HepG2 (cell line): ENCODE measurements at regions of chr13 and their contacts with region 1.

Region 1: GRCh38 chr13:41132512-41133152 is at the start of gene KBTBD6:
- DNase-seq: peak; percentile 97
- ATAC-seq: peak; percentile 98
- H3K4me3 ChIP-seq: peak within 1 kb of the TSS; percentile 76 to 89 (median 84)
- H3K27ac ChIP-seq: peak within 1 kb of the TSS; percentile 66
- H3K4me1 ChIP-seq: peaks cover 54% of the 10 kb centered on the region
- H3K27me3 ChIP-seq: no peaks in the 10 kb centered on the region
- CTCF ChIP-seq: peak; percentile 23; the same call in 1 of the 2 replicates
- EP300 ChIP-seq: peak in 1 of 2 experiments; percentile 46; a peak in 1 of 4 replicates
- POLR2A ChIP-seq: peak; percentile 82 to 88
- RAD21 ChIP-seq: 0 out of 2 replicates have a peak, but pooled peaks have one; percentile 22
- total RNA-seq, gene KBTBD6: 12.0 and 18.8 TPM in 2 replicates

Region 2: GRCh38 chr13:41075034-41075433 is 57.6 kb before region 1 on chr13:
- CTCF ChIA-PET with region 1: no interaction called
- POLR2A ChIA-PET with region 1: no interaction called
- in situ Hi-C with region 1: no loop called
- intact Hi-C with region 1: loop called (anchors 1 kb)
- DNase-seq: no peak
- ATAC-seq: no peak
- H3K4me3 ChIP-seq: no peak overlapping the region
- H3K27ac ChIP-seq: no peak overlapping the region
- H3K4me1 ChIP-seq: no peaks in the 10 kb centered on the region
- H3K27me3 ChIP-seq: no peaks in the 10 kb centered on the region
- CTCF ChIP-seq: peak; percentile 53
- EP300 ChIP-seq: no peak
- POLR2A ChIP-seq: no peak
- RAD21 ChIP-seq: 0 out of 2 replicates have a peak, but pooled peaks have one; percentile 36

Region 3: GRCh38 chr13:41085961-41086585 is 46.6 kb before region 1 on chr13:
- CTCF ChIA-PET with region 1: no interaction called
- POLR2A ChIA-PET with region 1: no interaction called
- in situ Hi-C with region 1: no loop called
- intact Hi-C with region 1: loop called (anchors 5 kb)
- DNase-seq: no peak
- ATAC-seq: peak; percentile 31; the same call in 1 of the 3 replicates
- H3K4me3 ChIP-seq: no peak overlapping the region
- H3K27ac ChIP-seq: no peak overlapping the region
- H3K4me1 ChIP-seq: no peaks in the 10 kb centered on the region
- H3K27me3 ChIP-seq: no peaks in the 10 kb centered on the region
- CTCF ChIP-seq: no peak
- EP300 ChIP-seq: no peak
- POLR2A ChIP-seq: no peak
- RAD21 ChIP-seq: no peak

Region 4: GRCh38 chr13:41107584-41108014 is 25.0 kb before region 1 on chr13:
- CTCF ChIA-PET with region 1: no interaction called
- POLR2A ChIA-PET with region 1: interaction called, 3 read pairs
- in situ Hi-C with region 1: no loop called
- intact Hi-C with region 1: loop called (anchors 2 kb)
- DNase-seq: peak; percentile 81
- ATAC-seq: peak; percentile 95
- H3K4me3 ChIP-seq: peak overlapping the region; percentile 69 to 79 (median 69)
- H3K27ac ChIP-seq: peak overlapping the region; percentile 59
- H3K4me1 ChIP-seq: peaks cover 12% of the 10 kb centered on the region
- H3K27me3 ChIP-seq: no peaks in the 10 kb centered on the region
- CTCF ChIP-seq: 0 out of 2 replicates have a peak, but pooled peaks have one; percentile 3
- EP300 ChIP-seq: no peak
- POLR2A ChIP-seq: peak; percentile 93 to 94
- RAD21 ChIP-seq: no peak; the same call in 1 of the 2 replicates

Region 5: GRCh38 chr13:41193919-41194824 is 61.5 kb after region 1 on chr13 and contains the start of gene KBTBD7:
- CTCF ChIA-PET with region 1: no interaction called
- POLR2A ChIA-PET with region 1: interaction called, 4 read pairs
- in situ Hi-C with region 1: loop called (anchors 5 kb)
- intact Hi-C with region 1: loop called (anchors 1 kb)
- DNase-seq: peak; percentile 91
- ATAC-seq: peak; percentile 98
- H3K4me3 ChIP-seq: peak within 1 kb of the TSS; percentile 57 to 89 (median 75)
- H3K27ac ChIP-seq: peak within 1 kb of the TSS; percentile 85
- H3K4me1 ChIP-seq: peaks cover 57% of the 10 kb centered on the region
- H3K27me3 ChIP-seq: no peaks in the 10 kb centered on the region; a peak in 1 of 5 replicates
- CTCF ChIP-seq: no peak; the same call in none of the 2 replicates
- EP300 ChIP-seq: 0 out of 4 replicates have a peak, but pooled peaks of 1 of the 2 experiments have one; percentile 44
- POLR2A ChIP-seq: peak; percentile 79 to 92
- RAD21 ChIP-seq: peak; percentile 27; the same call in 1 of the 2 replicates
- total RNA-seq, gene KBTBD7: 9.0 and 14.9 TPM in 2 replicates

Region 6: GRCh38 chr13:41222259-41222852 is 89.7 kb after region 1 on chr13:
- CTCF ChIA-PET with region 1: no interaction called
- POLR2A ChIA-PET with region 1: no interaction called
- in situ Hi-C with region 1: no loop called
- intact Hi-C with region 1: loop called (anchors 1 kb)
- DNase-seq: peak; percentile 50
- ATAC-seq: peak; percentile 91
- H3K4me3 ChIP-seq: no peak overlapping the region
- H3K27ac ChIP-seq: no peak overlapping the region
- H3K4me1 ChIP-seq: peaks cover 11% of the 10 kb centered on the region; the same call in 1 of the 2 replicates
- H3K27me3 ChIP-seq: no peaks in the 10 kb centered on the region
- CTCF ChIP-seq: peak; percentile 76
- EP300 ChIP-seq: no peak
- POLR2A ChIP-seq: no peak
- RAD21 ChIP-seq: peak; percentile 40; the same call in 1 of the 2 replicates